Caco-2 (cell line): ENCODE measurements at regions of chr10 and their contacts with region 1.

Region 1: GRCh38 chr10:112261281-112261822 is 21.8 kb upstream of the TECTB start:
- DNase-seq: peak; percentile 75 to 81
- H3K4me3 ChIP-seq: no peak overlapping the region
- H3K4me3 Mint-ChIP-seq: peak overlapping the region; percentile 2
- H3K27ac Mint-ChIP-seq: peak overlapping the region; percentile 75
- H3K4me1 ChIP-seq: peaks cover 31% of the 10 kb centered on the region
- H3K4me1 Mint-ChIP-seq: peaks cover 25% of the 10 kb centered on the region
- H3K27me3 ChIP-seq: no peaks in the 10 kb centered on the region
- H3K27me3 Mint-ChIP-seq: no peaks in the 10 kb centered on the region
- CTCF ChIP-seq: no peak

Region 2: GRCh38 chr10:112183329-112184051 is 77.9 kb before region 1 on chr10 and contains the start of gene GPAM:
- CTCF ChIA-PET with region 1: no interaction called
- POLR2A ChIA-PET with region 1: no interaction called
- intact Hi-C with region 1: loop called (anchors 1 kb)
- DNase-seq: peak; percentile 95 to 99
- H3K4me3 ChIP-seq: peak within 1 kb of the TSS; percentile 93
- H3K4me3 Mint-ChIP-seq: peak within 1 kb of the TSS; percentile 85
- H3K27ac Mint-ChIP-seq: peak within 1 kb of the TSS; percentile 92
- H3K4me1 ChIP-seq: peaks cover 35% of the 10 kb centered on the region
- H3K4me1 Mint-ChIP-seq: peaks cover 21% of the 10 kb centered on the region
- H3K27me3 ChIP-seq: no peaks in the 10 kb centered on the region
- H3K27me3 Mint-ChIP-seq: no peaks in the 10 kb centered on the region
- CTCF ChIP-seq: no peak
- total RNA-seq, gene GPAM: 40.2 and 44.4 TPM in 2 replicates

Region 3: GRCh38 chr10:112215342-112215774 is 46.0 kb before region 1 on chr10:
- CTCF ChIA-PET with region 1: no interaction called
- POLR2A ChIA-PET with region 1: no interaction called
- intact Hi-C with region 1: loop called (anchors 1 kb)
- DNase-seq: peak; percentile 60 to 76
- H3K4me3 ChIP-seq: 0 out of 2 replicates have a peak overlapping the region, but pooled peaks have one; percentile 6
- H3K4me3 Mint-ChIP-seq: peak overlapping the region; percentile 39
- H3K27ac Mint-ChIP-seq: peak overlapping the region; percentile 81
- H3K4me1 ChIP-seq: peaks cover 14% of the 10 kb centered on the region
- H3K4me1 Mint-ChIP-seq: peaks cover 13% of the 10 kb centered on the region
- H3K27me3 ChIP-seq: no peaks in the 10 kb centered on the region
- H3K27me3 Mint-ChIP-seq: no peaks in the 10 kb centered on the region
- CTCF ChIP-seq: no peak

Region 4: GRCh38 chr10:112280205-112280921 is 19.0 kb after region 1 on chr10:
- CTCF ChIA-PET with region 1: interaction called, 6 read pairs
- POLR2A ChIA-PET with region 1: interaction called, 5 read pairs
- intact Hi-C with region 1: loop called (anchors 1 kb)
- DNase-seq: peak; percentile 52 to 73
- H3K4me3 ChIP-seq: no peak overlapping the region
- H3K4me3 Mint-ChIP-seq: no peak overlapping the region
- H3K27ac Mint-ChIP-seq: peak overlapping the region; percentile 55
- H3K4me1 ChIP-seq: peaks cover 52% of the 10 kb centered on the region
- H3K4me1 Mint-ChIP-seq: peaks cover 27% of the 10 kb centered on the region
- H3K27me3 ChIP-seq: no peaks in the 10 kb centered on the region
- H3K27me3 Mint-ChIP-seq: no peaks in the 10 kb centered on the region
- CTCF ChIP-seq: no peak